ENCODE measurements at regions of chr6 and their contacts with region 1.

Region 1: GRCh38 chr6:70369332-70369950 is 43.9 kb upstream of the FAM135A start:
- DNase-seq: peak; percentile 84
- H3K4me3 ChIP-seq: no peak overlapping the region
- H3K27ac ChIP-seq: no peak overlapping the region
- H3K4me1 ChIP-seq: peaks cover 32% of the 10 kb centered on the region
- H3K27me3 ChIP-seq: peaks cover 22% of the 10 kb centered on the region
- CTCF ChIP-seq: peak; percentile 94

Region 2: GRCh38 chr6:69936674-69937363 is 432.6 kb before region 1 on chr6:
- CTCF ChIA-PET with region 1: no interaction called
- POLR2A ChIA-PET with region 1: no interaction called
- intact Hi-C with region 1: no loop called
- DNase-seq: no peak
- H3K4me3 ChIP-seq: no peak overlapping the region
- H3K27ac ChIP-seq: no peak overlapping the region
- H3K4me1 ChIP-seq: no peaks in the 10 kb centered on the region
- H3K27me3 ChIP-seq: no peaks in the 10 kb centered on the region
- CTCF ChIP-seq: no peak

Region 3: GRCh38 chr6:70686548-70687133 is 317.2 kb after region 1 on chr6:
- CTCF ChIA-PET with region 1: no interaction called
- POLR2A ChIA-PET with region 1: no interaction called
- intact Hi-C with region 1: loop called (anchors 10 kb)
- DNase-seq: peak; percentile 52
- H3K4me3 ChIP-seq: no peak overlapping the region
- H3K27ac ChIP-seq: no peak overlapping the region
- H3K4me1 ChIP-seq: no peaks in the 10 kb centered on the region
- H3K27me3 ChIP-seq: no peaks in the 10 kb centered on the region
- CTCF ChIP-seq: peak; percentile 79

Measured in A673 (cell line).